ENCODE measurements at regions of chr17 and their contacts with region 1.

Region 1: GRCh38 chr17:64020056-64020766 is at the start of gene ICAM2:
- DNase-seq: peak; percentile 97
- ATAC-seq: peak; percentile 83
- H3K4me3 ChIP-seq: peak within 1 kb of the TSS; percentile 70 to 87 (median 75)
- H3K4me3 Mint-ChIP-seq: peak within 1 kb of the TSS; percentile 98
- H3K27ac ChIP-seq: peak within 1 kb of the TSS; percentile 99
- H3K27ac Mint-ChIP-seq: peak within 1 kb of the TSS; percentile 99
- H3K4me1 ChIP-seq: peaks cover 59 to 66% of the 10 kb centered on the region in 2 donors
- H3K4me1 Mint-ChIP-seq: peaks cover 73% of the 10 kb centered on the region
- H3K27me3 ChIP-seq: no peaks in the 10 kb centered on the region
- H3K27me3 Mint-ChIP-seq: no peaks in the 10 kb centered on the region
- CTCF ChIP-seq: no peak
- total RNA-seq, gene ICAM2: 48.7 and 55.7 TPM in 2 replicates

Region 2: DNA sequence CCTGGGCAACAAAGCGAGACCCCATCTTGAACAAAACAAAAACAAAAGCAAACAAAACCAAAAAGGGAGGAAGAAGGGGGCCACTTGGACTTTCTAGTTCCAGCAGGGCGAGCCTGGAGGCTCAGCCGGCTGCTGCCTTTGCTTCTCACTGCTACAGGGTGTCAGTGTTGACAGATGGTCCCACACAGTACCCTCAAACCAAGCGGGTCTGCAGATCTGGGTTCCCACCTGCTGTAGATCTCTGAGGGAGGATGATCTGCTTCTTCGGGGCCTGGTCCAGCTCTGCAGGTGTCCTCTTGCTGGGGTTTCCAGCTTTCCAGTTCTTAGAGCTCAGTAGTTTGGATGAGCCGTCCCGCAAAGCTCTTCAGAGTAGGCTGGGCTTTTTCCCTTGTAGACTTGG is 115.9 kb before region 1 on chr17:
- CTCF ChIA-PET with region 1: interaction called, 164 read pairs
- POLR2A ChIA-PET with region 1: interaction called, 9 read pairs
- intact Hi-C with region 1: no loop called
- DNase-seq: no peak
- ATAC-seq: no peak
- H3K4me3 ChIP-seq: no peak overlapping the region
- H3K4me3 Mint-ChIP-seq: no peak overlapping the region
- H3K27ac ChIP-seq: no peak overlapping the region
- H3K27ac Mint-ChIP-seq: no peak overlapping the region
- H3K4me1 ChIP-seq: no peaks in the 10 kb centered on the region
- H3K4me1 Mint-ChIP-seq: peaks cover 4% of the 10 kb centered on the region
- H3K27me3 ChIP-seq: no peaks in the 10 kb centered on the region
- H3K27me3 Mint-ChIP-seq: peaks cover 8% of the 10 kb centered on the region
- CTCF ChIP-seq: no peak

Region 3: DNA sequence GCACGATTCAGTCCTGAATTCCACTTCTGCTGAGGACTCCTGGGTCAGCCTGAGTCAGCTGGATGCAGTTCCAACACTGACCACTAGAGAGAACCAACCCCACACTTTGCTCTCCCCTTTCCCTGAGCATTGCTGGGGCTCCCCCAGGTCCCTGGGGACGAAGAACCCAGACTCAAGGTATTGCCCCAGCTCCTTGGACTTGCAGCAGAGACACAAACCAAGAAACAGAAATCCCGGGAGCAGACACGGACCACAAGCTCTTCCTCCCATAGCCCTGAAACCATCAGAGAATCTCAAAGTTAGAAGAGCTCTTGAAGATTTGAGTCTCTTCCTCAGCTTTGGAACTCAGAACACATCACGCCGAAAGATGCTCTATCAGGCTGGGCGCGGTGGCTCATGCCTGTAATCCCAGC is 100.9 kb before region 1 on chr17:
- CTCF ChIA-PET with region 1: interaction called, 212 read pairs
- POLR2A ChIA-PET with region 1: interaction called, 29 read pairs
- intact Hi-C with region 1: loop called (anchors 1 kb)
- DNase-seq: peak; percentile 93
- ATAC-seq: peak; percentile 58
- H3K4me3 ChIP-seq: peak overlapping the region in 3 of 5 experiments; percentile 8 to 26 (median 19)
- H3K4me3 Mint-ChIP-seq: peak overlapping the region; percentile 87
- H3K27ac ChIP-seq: peak overlapping the region in 1 of 2 donors; percentile 18
- H3K27ac Mint-ChIP-seq: peak overlapping the region; percentile 86
- H3K4me1 ChIP-seq: peaks cover 68 to 83% of the 10 kb centered on the region in 2 donors
- H3K4me1 Mint-ChIP-seq: peaks cover 72% of the 10 kb centered on the region
- H3K27me3 ChIP-seq: no peaks in the 10 kb centered on the region
- H3K27me3 Mint-ChIP-seq: no peaks in the 10 kb centered on the region
- CTCF ChIP-seq: peak; percentile 88

Region 4: GRCh38 chr17:63946440-63947367 is 73.5 kb before region 1 on chr17:
- CTCF ChIA-PET with region 1: interaction called, 214 read pairs
- POLR2A ChIA-PET with region 1: interaction called, 45 read pairs
- intact Hi-C with region 1: loop called (anchors 1 kb)
- DNase-seq: peak; percentile 87
- ATAC-seq: peak; percentile 70
- H3K4me3 ChIP-seq: peak overlapping the region; percentile 20 to 59 (median 41)
- H3K4me3 Mint-ChIP-seq: peak overlapping the region; percentile 89
- H3K27ac ChIP-seq: peak overlapping the region; percentile 72 to 84
- H3K27ac Mint-ChIP-seq: peak overlapping the region; percentile 99
- H3K4me1 ChIP-seq: peaks cover 35 to 70% of the 10 kb centered on the region in 2 donors
- H3K4me1 Mint-ChIP-seq: peaks cover 46% of the 10 kb centered on the region
- H3K27me3 ChIP-seq: no peaks in the 10 kb centered on the region
- H3K27me3 Mint-ChIP-seq: no peaks in the 10 kb centered on the region
- CTCF ChIP-seq: peak; percentile 92

Region 5: GRCh38 chr17:63998050-63998720 is 22.0 kb before region 1 on chr17 and contains the start of gene PRR29:
- CTCF ChIA-PET with region 1: interaction called, 89 read pairs
- POLR2A ChIA-PET with region 1: interaction called, 3 read pairs
- intact Hi-C with region 1: loop called (anchors 1 kb)
- DNase-seq: peak; percentile 80
- ATAC-seq: peak; percentile 72
- H3K4me3 ChIP-seq: peak within 1 kb of the TSS; percentile 28 to 68 (median 63)
- H3K4me3 Mint-ChIP-seq: peak within 1 kb of the TSS; percentile 91
- H3K27ac ChIP-seq: no peak within 1 kb of the TSS
- H3K27ac Mint-ChIP-seq: peak within 1 kb of the TSS; percentile 63
- H3K4me1 ChIP-seq: peaks cover 27 to 32% of the 10 kb centered on the region in 2 donors
- H3K4me1 Mint-ChIP-seq: peaks cover 33% of the 10 kb centered on the region
- H3K27me3 ChIP-seq: peaks cover 0 to 20% (median 5%) of the 10 kb centered on the region in 4 experiments
- H3K27me3 Mint-ChIP-seq: peaks cover 10% of the 10 kb centered on the region
- CTCF ChIP-seq: no peak
- total RNA-seq, gene PRR29: not detected in 2 replicates

Region 6: DNA sequence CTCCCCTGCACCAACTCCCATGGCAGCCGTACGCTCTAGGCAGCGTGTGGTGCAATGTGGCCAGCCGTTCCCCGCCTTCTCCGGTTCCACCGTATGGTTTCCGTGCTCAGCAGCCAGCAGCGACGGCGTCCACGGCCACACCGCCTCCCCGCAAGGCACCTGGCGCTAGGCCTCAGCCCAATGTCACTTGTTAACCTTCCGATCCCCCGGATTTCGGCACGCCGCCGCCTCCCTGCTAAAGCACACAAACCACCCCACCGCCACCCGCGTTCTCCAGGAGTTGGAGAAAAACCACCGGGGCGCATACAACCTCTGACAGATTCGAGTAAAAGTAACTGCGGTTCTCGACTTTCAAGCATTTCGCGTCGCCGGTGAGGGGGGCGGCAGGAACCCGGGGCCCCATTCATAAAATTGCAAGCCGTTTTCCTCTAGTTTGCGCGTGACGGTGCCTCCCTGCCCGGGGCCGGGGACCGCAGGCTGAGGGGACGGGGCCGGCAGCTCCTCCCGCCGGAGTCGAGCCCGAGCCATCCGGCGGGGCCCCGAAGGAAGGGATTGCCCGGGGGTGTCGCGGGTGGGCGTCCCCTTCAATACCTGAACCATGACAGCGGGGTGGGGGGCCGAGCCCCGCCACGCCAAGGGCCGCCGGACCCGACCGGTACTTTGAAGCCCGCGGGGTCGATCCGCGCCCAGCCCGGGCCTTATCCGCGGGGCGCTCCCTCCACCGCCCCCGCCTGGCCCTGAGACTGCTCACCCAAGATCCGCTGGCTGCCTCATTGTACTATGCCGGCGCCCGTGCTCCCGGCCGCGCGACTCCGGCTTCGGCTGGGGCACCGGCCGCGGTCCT is 242.4 kb after region 1 on chr17 and contains the start of gene TEX2:
- CTCF ChIA-PET with region 1: no interaction called
- POLR2A ChIA-PET with region 1: interaction called, 3 read pairs
- intact Hi-C with region 1: loop called (anchors 2 kb)
- DNase-seq: peak; percentile 67
- ATAC-seq: peak; percentile 25
- H3K4me3 ChIP-seq: peak within 1 kb of the TSS; percentile 54 to 89 (median 74)
- H3K4me3 Mint-ChIP-seq: peak within 1 kb of the TSS; percentile 92
- H3K27ac ChIP-seq: peak within 1 kb of the TSS; percentile 48 to 68
- H3K27ac Mint-ChIP-seq: peak within 1 kb of the TSS; percentile 90
- H3K4me1 ChIP-seq: peaks cover 10 to 22% of the 10 kb centered on the region in 2 donors
- H3K4me1 Mint-ChIP-seq: peaks cover 28% of the 10 kb centered on the region
- H3K27me3 ChIP-seq: peaks cover 0 to 6% (median 0%) of the 10 kb centered on the region in 4 experiments
- H3K27me3 Mint-ChIP-seq: peaks cover 6% of the 10 kb centered on the region
- CTCF ChIP-seq: no peak
- total RNA-seq, gene TEX2: 6.9 and 7.6 TPM in 2 replicates

Region 7: DNA sequence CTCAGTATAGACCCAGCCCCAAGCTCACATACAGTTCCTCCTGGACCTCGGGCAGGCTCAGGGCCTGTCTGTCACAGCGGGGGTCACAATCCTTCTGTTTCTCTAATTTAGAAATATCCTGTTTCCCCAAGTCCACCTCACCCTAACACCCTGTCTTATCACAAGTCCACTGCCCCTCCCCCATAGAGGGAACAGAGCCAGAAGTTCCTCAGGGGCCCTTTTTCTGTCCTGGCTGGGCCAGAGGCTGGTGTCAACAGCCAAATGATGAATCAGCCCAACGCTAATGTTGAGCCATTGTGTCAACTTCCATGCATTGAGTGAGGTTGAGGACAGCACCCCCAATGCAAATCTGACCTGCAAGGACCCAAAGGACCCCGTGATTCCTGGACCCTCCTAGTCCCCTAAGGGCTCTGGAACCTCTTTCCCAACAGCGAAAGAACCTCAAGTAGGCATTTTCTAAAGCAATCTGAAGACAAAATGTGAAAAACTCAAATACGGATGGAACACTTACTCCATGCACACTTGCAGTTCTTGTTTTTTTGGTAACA is 311.8 kb after region 1 on chr17:
- CTCF ChIA-PET with region 1: no interaction called
- POLR2A ChIA-PET with region 1: no interaction called
- intact Hi-C with region 1: no loop called
- DNase-seq: no peak
- ATAC-seq: no peak
- H3K4me3 ChIP-seq: no peak overlapping the region
- H3K4me3 Mint-ChIP-seq: no peak overlapping the region
- H3K27ac ChIP-seq: no peak overlapping the region
- H3K27ac Mint-ChIP-seq: no peak overlapping the region
- H3K4me1 ChIP-seq: peaks cover 14% of the 10 kb centered on the region in 2 donors
- H3K4me1 Mint-ChIP-seq: peaks cover 13% of the 10 kb centered on the region
- H3K27me3 ChIP-seq: no peaks in the 10 kb centered on the region
- H3K27me3 Mint-ChIP-seq: no peaks in the 10 kb centered on the region
- CTCF ChIP-seq: no peak

Measured in B cell (primary cell).